AG04450 (cell line): ENCODE measurements at regions of chr5 and their contacts with region 1.

Region 1: DNA sequence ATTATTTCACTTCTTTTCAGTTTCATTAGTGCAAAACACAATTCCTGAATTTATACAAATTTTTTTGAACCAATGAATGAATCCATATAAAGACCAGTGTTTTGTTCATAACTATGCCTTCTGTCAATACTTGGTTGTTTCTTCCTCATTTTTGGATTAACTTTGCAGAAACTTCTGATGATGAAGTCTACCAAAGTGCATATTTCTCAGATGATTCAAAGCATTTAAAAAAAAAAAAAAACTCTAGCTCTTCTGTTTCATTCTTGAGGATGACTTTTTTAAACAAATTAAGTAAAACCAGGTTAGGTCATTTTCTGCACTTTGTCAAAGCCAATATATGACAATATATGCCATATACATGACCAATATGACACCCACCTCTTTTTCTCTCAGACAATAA is 92.6 kb downstream of the CHSY3 start:
- DNase-seq: no peak
- H3K4me3 ChIP-seq: no peak overlapping the region
- H3K27ac ChIP-seq: no peak overlapping the region
- H3K27me3 ChIP-seq: no peaks in the 10 kb centered on the region
- CTCF ChIP-seq: no peak

Region 2: GRCh38 chr5:129857116-129857515 is 139.8 kb before region 1 on chr5:
- CTCF ChIA-PET with region 1: no interaction called
- POLR2A ChIA-PET with region 1: no interaction called
- DNase-seq: no peak
- H3K4me3 ChIP-seq: no peak overlapping the region
- H3K27ac ChIP-seq: no peak overlapping the region
- H3K27me3 ChIP-seq: no peaks in the 10 kb centered on the region
- CTCF ChIP-seq: no peak

Region 3: DNA sequence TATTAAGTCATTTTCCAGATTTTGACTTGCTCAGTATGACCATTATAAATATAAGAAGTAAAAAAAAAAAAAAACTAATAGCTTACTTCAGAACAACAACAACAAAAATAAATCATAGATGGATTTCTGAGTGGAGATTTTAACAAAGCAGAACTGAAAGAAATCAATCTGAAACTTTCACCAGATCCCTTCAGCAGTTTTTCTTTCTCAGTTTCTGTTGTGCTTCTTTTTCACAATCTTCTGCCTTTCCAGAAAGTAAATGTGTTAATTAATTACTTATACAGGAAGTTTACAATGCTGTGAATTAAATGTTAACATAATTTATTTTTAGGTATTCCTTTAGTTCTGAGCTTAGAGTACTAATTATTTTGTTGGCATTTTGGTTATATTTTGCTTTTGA is 19.1 kb before region 1 on chr5:
- CTCF ChIA-PET with region 1: no interaction called
- POLR2A ChIA-PET with region 1: no interaction called
- DNase-seq: no peak
- H3K4me3 ChIP-seq: no peak overlapping the region
- H3K27ac ChIP-seq: no peak overlapping the region
- H3K27me3 ChIP-seq: no peaks in the 10 kb centered on the region
- CTCF ChIP-seq: no peak

Region 4: GRCh38 chr5:130066644-130067043 is 69.7 kb after region 1 on chr5:
- CTCF ChIA-PET with region 1: no interaction called
- POLR2A ChIA-PET with region 1: no interaction called
- DNase-seq: no peak
- H3K4me3 ChIP-seq: no peak overlapping the region
- H3K27ac ChIP-seq: no peak overlapping the region
- H3K27me3 ChIP-seq: no peaks in the 10 kb centered on the region
- CTCF ChIP-seq: no peak

Region 5: GRCh38 chr5:130206686-130207085 is 209.8 kb after region 1 on chr5:
- CTCF ChIA-PET with region 1: interaction called, 11 read pairs
- POLR2A ChIA-PET with region 1: no interaction called
- DNase-seq: no peak
- H3K4me3 ChIP-seq: no peak overlapping the region
- H3K27ac ChIP-seq: no peak overlapping the region
- H3K27me3 ChIP-seq: no peaks in the 10 kb centered on the region
- CTCF ChIP-seq: no peak

Region 6: GRCh38 chr5:130830853-130831252 is 834.0 kb after region 1 on chr5:
- CTCF ChIA-PET with region 1: no interaction called
- POLR2A ChIA-PET with region 1: no interaction called
- DNase-seq: no peak
- H3K4me3 ChIP-seq: no peak overlapping the region
- H3K27ac ChIP-seq: no peak overlapping the region
- H3K27me3 ChIP-seq: no peaks in the 10 kb centered on the region
- CTCF ChIP-seq: no peak